Activated B cell treated with CpG ODN at 0.5 μM for 24 hours (primary cell): ENCODE measurements at regions of chr2 and their contacts with region 1.

Region 1: GRCh38 chr2:85551698-85552678 is 9.3 kb downstream of the GGCX start:
- DNase-seq: peak; percentile 63
- ATAC-seq: peak; percentile 98
- H3K4me3 Mint-ChIP-seq: no peak overlapping the region
- H3K27ac Mint-ChIP-seq: no peak overlapping the region
- H3K4me1 Mint-ChIP-seq: peaks cover 4% of the 10 kb centered on the region
- H3K27me3 Mint-ChIP-seq: no peaks in the 10 kb centered on the region
- CTCF ChIP-seq: peak; percentile 28

Region 2: GRCh38 chr2:85302121-85302520 is 249.9 kb before region 1 on chr2:
- CTCF ChIA-PET with region 1: interaction called, 11 read pairs
- POLR2A ChIA-PET with region 1: no interaction called
- intact Hi-C with region 1: loop called (anchors 1 kb)
- DNase-seq: no peak
- ATAC-seq: no peak
- H3K4me3 Mint-ChIP-seq: no peak overlapping the region
- H3K27ac Mint-ChIP-seq: no peak overlapping the region
- H3K4me1 Mint-ChIP-seq: peaks cover 4% of the 10 kb centered on the region
- H3K27me3 Mint-ChIP-seq: peaks cover 23% of the 10 kb centered on the region
- CTCF ChIP-seq: no peak

Region 3: DNA sequence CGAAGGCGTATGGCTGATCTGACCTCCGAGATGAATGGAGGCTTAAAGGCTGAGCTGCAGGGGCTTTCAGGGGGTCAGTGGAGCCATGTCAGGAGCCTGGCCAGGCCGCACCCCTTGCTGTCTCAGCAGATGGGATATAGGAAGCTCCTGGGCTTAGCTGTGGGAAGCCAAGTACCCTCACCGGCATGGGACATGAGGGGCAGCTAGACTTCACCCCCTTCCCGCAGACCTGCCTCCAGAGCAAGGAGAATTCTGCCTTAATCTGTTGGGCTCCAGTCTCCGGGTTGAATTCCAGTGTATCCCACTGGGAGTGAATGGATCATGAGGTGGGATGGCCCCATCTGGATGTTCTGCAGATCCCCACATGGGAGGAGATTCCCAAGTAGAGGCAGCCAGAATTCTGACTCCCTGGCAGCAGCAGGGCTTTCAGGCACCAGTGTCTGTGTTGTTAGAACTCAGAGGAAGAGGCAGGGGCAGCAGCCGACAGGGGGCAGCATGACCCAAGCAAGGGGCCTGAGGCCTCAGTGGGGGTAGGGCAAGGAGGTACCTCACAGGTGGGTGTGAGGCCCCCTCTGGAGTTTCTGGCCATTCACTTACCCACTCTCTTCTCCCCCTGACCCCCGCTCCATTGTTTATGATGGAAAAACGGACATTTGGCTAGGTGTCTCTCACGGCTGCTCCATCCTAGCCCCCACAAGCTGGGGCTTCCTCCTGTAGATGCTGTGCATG is 160.9 kb before region 1 on chr2:
- CTCF ChIA-PET with region 1: interaction called, 105 read pairs
- POLR2A ChIA-PET with region 1: interaction called, 6 read pairs
- intact Hi-C with region 1: loop called (anchors 1 kb)
- DNase-seq: peak; percentile 69
- ATAC-seq: peak; percentile 22
- H3K4me3 Mint-ChIP-seq: no peak overlapping the region
- H3K27ac Mint-ChIP-seq: peak overlapping the region; percentile 81
- H3K4me1 Mint-ChIP-seq: peaks cover 30% of the 10 kb centered on the region
- H3K27me3 Mint-ChIP-seq: no peaks in the 10 kb centered on the region
- CTCF ChIP-seq: no peak

Region 4: GRCh38 chr2:85437488-85438284 is 114.3 kb before region 1 on chr2:
- CTCF ChIA-PET with region 1: interaction called, 25 read pairs
- POLR2A ChIA-PET with region 1: interaction called, 7 read pairs
- intact Hi-C with region 1: no loop called
- DNase-seq: peak; percentile 80
- ATAC-seq: peak; percentile 86
- H3K4me3 Mint-ChIP-seq: peak overlapping the region; percentile 87
- H3K27ac Mint-ChIP-seq: peak overlapping the region; percentile 95
- H3K4me1 Mint-ChIP-seq: peaks cover 33% of the 10 kb centered on the region
- H3K27me3 Mint-ChIP-seq: no peaks in the 10 kb centered on the region
- CTCF ChIP-seq: no peak

Region 5: GRCh38 chr2:85504778-85505323 is 47.1 kb before region 1 on chr2:
- CTCF ChIA-PET with region 1: no interaction called
- POLR2A ChIA-PET with region 1: no interaction called
- intact Hi-C with region 1: no loop called
- DNase-seq: no peak
- ATAC-seq: no peak
- H3K4me3 Mint-ChIP-seq: no peak overlapping the region
- H3K27ac Mint-ChIP-seq: no peak overlapping the region
- H3K4me1 Mint-ChIP-seq: peaks cover 9% of the 10 kb centered on the region
- H3K27me3 Mint-ChIP-seq: no peaks in the 10 kb centered on the region
- CTCF ChIP-seq: no peak

Region 6: DNA sequence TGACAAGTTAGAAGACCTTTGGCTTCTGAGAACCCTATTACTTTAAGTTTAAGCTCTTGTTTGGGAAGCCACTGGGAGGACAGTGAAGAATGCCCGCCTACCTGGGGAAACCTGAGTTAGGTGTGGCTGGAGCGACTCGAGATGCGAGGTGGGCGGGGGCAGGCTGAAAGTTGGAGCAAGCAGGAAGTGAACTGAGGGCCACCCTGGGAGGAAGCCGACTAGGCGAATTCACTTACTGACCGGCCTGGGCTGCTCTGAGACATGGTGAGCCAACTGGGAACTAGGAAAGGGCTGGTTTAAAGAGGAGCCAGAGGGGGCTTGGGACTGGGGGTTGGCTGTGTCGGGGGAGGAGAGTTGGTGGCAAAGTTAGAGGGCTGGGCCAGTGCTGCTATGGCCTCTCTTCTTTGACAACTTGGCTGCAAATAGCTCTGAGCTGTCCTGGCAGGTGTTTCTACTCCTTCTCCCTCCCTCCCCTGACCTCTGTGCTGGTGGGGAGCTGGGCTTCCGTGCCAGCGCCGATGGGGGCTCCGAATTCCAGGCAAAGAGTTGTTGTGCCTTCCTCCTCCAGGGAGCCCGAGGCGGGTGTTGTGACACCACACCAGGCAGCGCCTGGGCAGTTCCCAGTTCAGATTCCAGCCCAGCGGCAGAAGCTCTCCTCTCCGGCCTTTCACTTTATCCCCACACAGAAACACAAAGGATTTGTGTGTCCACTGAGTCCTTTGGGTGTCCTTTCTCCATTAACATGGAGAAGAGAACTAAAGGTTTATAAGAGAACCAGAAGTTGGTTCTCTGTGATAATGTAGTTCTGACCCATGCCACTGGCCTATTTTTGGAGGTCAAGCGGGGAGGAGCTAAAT is 25.6 kb after region 1 on chr2 and contains the start of gene VAMP8:
- CTCF ChIA-PET with region 1: no interaction called
- POLR2A ChIA-PET with region 1: interaction called, 14 read pairs
- intact Hi-C with region 1: no loop called
- DNase-seq: peak; percentile 56
- ATAC-seq: peak; percentile 76
- H3K4me3 Mint-ChIP-seq: peak within 1 kb of the TSS; percentile 94
- H3K27ac Mint-ChIP-seq: peak within 1 kb of the TSS; percentile 93
- H3K4me1 Mint-ChIP-seq: peaks cover 37% of the 10 kb centered on the region
- H3K27me3 Mint-ChIP-seq: no peaks in the 10 kb centered on the region
- CTCF ChIP-seq: no peak
- total RNA-seq, gene VAMP8: 128 and 145 TPM in 2 replicates